Posterior cingulate gyrus (tissue), 11 donors: ENCODE measurements at regions of chr4 and their contacts with region 1.

Region 1: GRCh38 chr4:153573881-153574802 is 108.0 kb downstream of the TMEM131L start:
- DNase-seq: peak; percentile 42 to 96 (median 78)

Region 2: DNA sequence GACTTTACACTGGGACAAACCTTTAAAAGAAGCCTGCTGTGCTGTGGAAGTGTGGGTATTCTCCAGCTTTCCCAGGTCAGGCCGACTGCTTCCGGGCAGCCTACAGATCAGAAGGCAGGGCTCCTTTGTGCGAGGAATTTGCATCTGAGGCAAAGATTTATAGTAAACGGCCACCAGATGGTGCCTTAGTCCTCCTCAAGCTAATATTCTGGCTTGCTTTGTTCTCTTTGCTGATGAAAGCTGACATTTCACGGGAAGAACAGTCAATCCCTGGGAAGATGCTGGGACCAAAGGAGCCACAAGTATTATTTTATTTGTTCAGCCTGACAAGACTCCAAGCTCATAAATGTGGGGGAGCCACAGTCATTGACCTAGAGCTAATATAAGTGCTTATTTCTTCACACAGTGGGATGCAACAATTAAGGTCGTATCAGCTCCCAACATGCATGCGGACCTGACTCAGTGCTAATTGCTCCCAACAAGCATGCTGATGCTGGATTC is 490.6 kb before region 1 on chr4:
- intact Hi-C with region 1: loop called (anchors 10 kb)
- DNase-seq: peak in 7 of 10 donors; percentile 44 to 89 (median 63)

Region 3: DNA sequence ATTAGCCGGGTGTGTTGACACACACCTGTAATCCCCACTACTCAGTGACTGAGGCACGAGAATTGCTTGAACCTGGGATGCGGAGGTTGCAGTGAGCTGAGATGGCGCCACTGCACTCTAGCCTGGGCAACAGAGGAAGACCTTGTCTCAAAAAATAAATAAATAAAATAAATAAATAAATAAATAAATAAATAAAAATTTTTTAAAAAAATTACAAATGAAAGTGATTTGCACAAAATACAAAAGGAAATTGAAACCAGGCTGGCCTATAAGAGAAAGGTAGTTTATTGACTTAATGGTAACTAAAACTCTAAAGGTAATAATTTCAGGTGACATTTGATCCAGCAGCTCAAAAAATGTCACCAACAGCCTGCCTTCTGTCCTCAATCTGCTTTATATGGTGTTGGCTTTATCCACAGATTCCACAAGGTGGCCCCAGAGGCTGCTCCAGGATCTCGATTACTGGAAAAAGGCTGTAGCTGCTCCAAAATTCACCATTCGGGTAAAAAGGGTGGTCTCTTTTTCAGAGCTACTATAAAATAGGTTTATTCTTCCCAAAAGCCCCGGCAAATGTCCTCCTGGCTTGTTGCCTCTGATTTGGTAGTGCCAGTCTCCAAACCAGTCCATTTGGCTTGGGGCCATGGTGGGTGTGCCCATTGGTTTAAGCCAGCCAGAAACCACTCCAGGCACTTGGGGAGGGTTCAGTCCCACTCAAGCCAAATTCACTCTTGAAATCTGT is 431.3 kb before region 1 on chr4:
- intact Hi-C with region 1: loop called (anchors 2 kb)
- DNase-seq: peak; percentile 50 to 95 (median 76)

Region 4: DNA sequence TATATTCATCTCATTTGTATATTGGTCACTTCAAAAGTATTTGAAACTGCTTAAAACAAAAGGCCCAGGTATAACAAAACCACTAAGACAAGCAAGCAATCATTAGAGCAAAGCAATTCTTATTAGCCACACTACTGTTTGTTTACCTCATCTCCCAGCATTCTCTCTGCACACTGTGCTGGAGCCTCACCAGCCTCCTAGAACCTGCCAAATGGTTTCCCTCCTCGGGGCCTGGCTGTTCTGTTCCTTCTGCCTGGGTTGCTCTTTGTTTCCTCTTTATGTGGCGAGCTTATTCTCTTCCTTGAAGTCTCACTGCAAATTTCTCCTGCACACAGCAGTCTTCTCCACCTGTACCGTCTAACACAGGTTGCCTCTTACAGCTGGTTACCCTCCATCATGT is 297.2 kb before region 1 on chr4:
- intact Hi-C with region 1: no loop called
- DNase-seq: peak in 1 of 10 donors; percentile 73

Region 5: DNA sequence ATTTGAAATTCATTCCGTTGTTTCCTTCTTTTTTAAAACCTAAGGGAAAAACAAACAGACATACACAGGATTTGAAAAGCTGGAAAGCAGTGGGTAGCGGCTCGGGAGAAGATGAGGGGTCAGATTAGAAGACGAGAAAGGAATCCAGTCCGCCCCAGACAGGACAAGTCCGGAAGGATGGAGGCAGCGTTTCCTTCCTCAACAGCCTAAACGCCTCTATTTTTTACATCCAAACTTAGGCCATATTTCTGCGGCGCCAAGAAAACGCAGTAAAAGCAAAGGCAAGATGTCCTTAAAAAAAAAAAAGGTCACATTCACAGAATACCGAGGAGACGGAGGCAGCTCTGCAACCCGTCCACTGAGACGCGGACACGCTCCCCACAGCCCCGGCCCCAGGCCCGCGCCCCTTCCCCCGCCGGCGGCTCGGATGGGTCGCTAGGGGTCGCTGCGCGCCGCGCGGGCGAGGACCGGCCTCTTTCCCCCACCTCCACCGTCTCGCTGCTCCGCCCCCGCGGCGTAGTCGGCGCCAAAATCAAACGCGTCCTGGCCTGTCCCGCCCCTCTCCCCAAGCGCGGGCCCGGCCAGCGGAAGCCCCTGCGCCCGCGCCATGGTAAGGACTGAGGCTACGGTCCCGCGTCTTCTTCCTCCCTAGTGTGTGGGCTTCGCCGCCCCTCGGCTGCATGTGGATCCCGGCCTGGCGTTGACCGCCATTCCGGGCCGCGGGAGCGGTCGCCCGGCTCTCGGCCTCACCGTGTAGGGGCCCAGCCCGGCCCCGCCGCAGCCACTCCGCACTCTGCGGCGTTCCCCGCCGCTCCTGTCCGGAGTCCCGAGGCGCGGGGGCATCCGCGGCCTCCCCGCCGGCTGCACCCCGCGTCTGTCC is 229.8 kb before region 1 on chr4 and contains the start of gene MND1:
- intact Hi-C with region 1: loop called (anchors 1 kb)
- DNase-seq: peak; percentile 71 to 97 (median 84)

Region 6: DNA sequence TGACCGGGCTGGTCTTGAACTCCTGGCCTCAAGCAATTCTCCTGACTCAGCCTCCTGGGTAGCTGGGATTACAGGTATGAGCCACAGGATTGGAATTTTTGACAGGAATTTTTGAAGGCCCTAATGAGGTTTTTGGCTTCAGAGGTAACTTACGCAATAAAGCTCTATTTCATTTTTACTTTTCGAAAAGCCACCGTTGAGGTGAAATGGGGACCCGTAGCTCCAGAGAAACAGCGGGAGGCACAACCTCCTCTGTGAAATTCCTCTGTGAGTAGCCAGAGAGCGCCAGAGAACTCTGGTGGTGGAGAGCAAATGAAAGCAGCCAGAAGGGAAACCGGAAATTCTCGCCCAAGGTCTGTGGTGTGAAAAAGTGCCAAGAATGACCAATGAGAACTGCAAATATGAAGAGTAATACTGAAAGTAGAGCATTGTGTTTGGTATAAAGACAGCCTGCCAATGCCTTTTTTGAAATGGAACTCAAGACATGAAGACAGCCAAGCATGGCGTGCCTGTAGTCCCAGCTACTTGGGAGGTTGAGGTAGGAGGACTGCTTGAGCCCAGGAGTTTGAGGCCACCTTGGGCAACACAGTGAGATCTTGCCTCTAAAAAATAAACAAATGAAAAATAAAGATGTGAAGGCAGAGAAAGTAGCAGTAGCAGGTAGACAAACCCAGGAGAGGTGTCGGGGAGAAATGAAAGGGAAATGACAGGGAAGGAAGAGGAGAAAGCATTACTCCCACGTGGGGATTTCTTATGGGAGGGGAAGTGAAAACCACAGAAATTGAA is 141.0 kb before region 1 on chr4:
- intact Hi-C with region 1: loop called (anchors 10 kb)
- DNase-seq: peak in 1 of 10 donors; percentile 17

Region 7: DNA sequence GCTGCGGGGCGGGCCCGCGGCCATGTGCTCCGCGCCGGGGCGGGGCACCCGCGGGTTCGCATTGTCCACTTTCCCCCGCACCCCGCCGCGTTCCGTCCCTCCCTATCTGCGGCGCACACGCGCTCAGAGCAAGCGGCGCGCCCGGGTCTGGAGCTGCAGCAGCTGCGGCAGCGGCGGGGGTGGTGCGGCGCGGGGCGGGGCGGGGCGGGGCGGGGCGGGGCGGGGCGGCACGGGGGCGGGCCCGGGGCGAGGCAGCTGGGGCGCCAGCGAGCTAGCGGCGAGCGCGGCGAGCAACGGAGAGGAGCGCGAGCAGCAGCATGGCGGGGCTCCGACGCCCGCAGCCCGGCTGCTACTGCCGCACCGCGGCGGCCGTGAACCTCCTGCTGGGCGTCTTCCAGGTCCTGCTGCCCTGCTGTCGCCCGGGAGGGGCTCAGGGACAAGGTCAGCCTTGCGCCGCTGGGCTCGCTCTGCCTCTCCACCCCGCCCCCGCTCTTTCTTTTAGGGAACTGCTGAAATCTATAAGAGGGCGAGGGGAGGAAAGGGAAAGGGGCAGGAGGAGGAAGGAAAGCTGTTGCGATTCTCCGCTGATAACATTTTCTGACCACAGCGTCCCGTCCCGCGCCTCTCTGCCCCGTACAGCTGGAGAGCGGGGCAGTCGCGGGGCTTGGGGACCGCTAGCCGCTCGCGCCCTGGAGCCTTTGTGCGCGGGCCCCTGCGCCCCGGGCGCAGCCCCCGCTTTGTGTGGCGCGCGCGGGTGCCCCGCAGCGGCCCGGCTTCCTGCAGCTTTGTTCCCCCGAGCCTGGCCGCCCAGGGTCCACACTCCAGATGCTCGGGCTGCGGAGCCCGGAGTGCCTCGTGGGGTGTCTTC is 107.8 kb before region 1 on chr4 and contains the start of gene TMEM131L:
- intact Hi-C with region 1: loop called (anchors 1 kb)
- DNase-seq: peak; percentile 48 to 96 (median 60)